Activated CD8-positive, alpha-beta T cell treated with anti-CD3 and anti-CD28 coated beads, Interleukin-2, amount 10 ng/mL, durations not matched to agents 7 days and 5 days (primary cell): ENCODE measurements at regions of chr14 and their contacts with region 1.

Region 1: GRCh38 chr14:39432179-39432618 is at the start of gene FBXO33:
- DNase-seq: peak; percentile 97
- ATAC-seq: peak; percentile 84
- H3K4me3 Mint-ChIP-seq: peak within 1 kb of the TSS; percentile 97
- H3K27ac Mint-ChIP-seq: peak within 1 kb of the TSS; percentile 100
- H3K4me1 Mint-ChIP-seq: peaks cover 40% of the 10 kb centered on the region
- H3K27me3 Mint-ChIP-seq: no peaks in the 10 kb centered on the region
- total RNA-seq, gene FBXO33: 18.7 to 19.0 TPM

Region 2: GRCh38 chr14:39102969-39103957 is 328.9 kb before region 1 on chr14 and contains the start of gene SEC23A:
- CTCF ChIA-PET with region 1: interaction called, 5 read pairs
- POLR2A ChIA-PET with region 1: interaction called, 37 read pairs
- DNase-seq: peak; percentile 88
- ATAC-seq: peak; percentile 95
- H3K4me3 Mint-ChIP-seq: peak within 1 kb of the TSS; percentile 96
- H3K27ac Mint-ChIP-seq: peak within 1 kb of the TSS; percentile 97
- H3K4me1 Mint-ChIP-seq: peaks cover 50% of the 10 kb centered on the region
- H3K27me3 Mint-ChIP-seq: no peaks in the 10 kb centered on the region
- total RNA-seq, gene SEC23A: 48.2 to 50.2 TPM

Region 3: DNA sequence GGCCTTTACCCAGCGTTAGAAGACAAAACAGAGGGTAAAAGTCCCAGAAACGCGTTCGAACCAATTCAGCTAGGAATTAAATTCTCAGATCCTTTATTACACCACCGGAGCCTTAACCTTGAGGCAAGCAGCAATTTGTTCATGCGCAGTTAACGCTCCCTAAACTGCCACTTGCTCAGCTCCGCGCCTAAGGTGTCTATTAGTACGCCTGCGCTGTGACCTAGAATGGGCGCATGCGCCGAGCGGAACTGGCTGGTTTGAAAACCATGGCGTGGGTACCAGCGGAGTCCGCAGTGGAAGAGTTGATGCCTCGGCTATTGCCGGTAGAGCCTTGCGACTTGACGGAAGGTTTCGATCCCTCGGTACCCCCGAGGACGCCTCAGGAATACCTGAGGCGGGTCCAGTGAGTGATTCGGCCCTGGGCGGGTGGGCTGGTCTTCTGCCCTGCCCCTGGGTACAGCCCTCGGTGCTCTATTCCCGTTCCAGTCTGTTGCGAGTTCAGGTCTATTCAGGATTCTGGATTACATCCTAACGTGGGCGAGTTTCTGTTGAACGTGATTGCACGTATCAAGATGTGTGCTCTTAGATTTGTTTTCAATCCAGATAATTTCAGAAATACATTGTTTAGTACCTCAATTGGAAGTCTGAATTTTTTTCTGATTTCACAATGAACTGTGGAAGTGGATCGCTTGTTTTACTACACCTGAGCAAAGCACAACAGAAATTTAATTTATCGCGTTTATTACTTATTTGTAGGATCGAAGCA is 317.9 kb before region 1 on chr14 and contains the start of gene GEMIN2:
- CTCF ChIA-PET with region 1: no interaction called
- POLR2A ChIA-PET with region 1: interaction called, 17 read pairs
- DNase-seq: peak; percentile 96
- ATAC-seq: peak; percentile 99
- H3K4me3 Mint-ChIP-seq: peak within 1 kb of the TSS; percentile 95
- H3K27ac Mint-ChIP-seq: peak within 1 kb of the TSS; percentile 92
- H3K4me1 Mint-ChIP-seq: peaks cover 35% of the 10 kb centered on the region
- H3K27me3 Mint-ChIP-seq: peaks cover 2% of the 10 kb centered on the region
- total RNA-seq, gene GEMIN2: 25.4 to 26.7 TPM

Region 4: DNA sequence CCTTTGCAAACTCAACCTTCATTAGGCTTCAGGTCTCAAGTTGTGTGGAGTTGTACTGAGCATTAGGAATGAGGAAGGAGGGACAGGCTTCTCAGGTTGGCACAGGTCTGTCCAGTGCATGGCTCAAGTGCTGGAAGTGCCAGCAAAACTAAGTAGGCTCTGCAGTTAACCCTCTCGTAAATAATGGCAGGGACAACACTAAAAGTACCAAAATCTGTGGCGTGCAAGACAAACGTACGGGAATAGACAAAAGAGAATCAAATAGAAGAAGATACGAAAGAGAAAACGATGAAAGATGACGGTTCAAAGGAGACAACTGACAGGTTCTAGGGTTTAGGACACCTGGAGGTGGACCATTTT is 262.7 kb before region 1 on chr14:
- CTCF ChIA-PET with region 1: interaction called, 4 read pairs
- POLR2A ChIA-PET with region 1: interaction called, 24 read pairs
- DNase-seq: no peak
- ATAC-seq: peak; percentile 4
- H3K4me3 Mint-ChIP-seq: peak overlapping the region; percentile 82
- H3K27ac Mint-ChIP-seq: peak overlapping the region; percentile 98
- H3K4me1 Mint-ChIP-seq: peaks cover 44% of the 10 kb centered on the region
- H3K27me3 Mint-ChIP-seq: no peaks in the 10 kb centered on the region

Region 5: GRCh38 chr14:39174560-39175444 is 257.4 kb before region 1 on chr14 and contains the start of gene PNN:
- CTCF ChIA-PET with region 1: interaction called, 4 read pairs
- POLR2A ChIA-PET with region 1: interaction called, 24 read pairs
- DNase-seq: peak; percentile 99
- ATAC-seq: peak; percentile 92
- H3K4me3 Mint-ChIP-seq: peak within 1 kb of the TSS; percentile 98
- H3K27ac Mint-ChIP-seq: peak within 1 kb of the TSS; percentile 99
- H3K4me1 Mint-ChIP-seq: peaks cover 45% of the 10 kb centered on the region
- H3K27me3 Mint-ChIP-seq: no peaks in the 10 kb centered on the region
- total RNA-seq, gene PNN: 94.1 to 103 TPM

Region 6: GRCh38 chr14:39266871-39267591 is 165.2 kb before region 1 on chr14:
- CTCF ChIA-PET with region 1: interaction called, 3 read pairs
- POLR2A ChIA-PET with region 1: interaction called, 44 read pairs
- DNase-seq: peak; percentile 83
- ATAC-seq: peak; percentile 86
- H3K4me3 Mint-ChIP-seq: peak overlapping the region; percentile 93
- H3K27ac Mint-ChIP-seq: peak overlapping the region; percentile 97
- H3K4me1 Mint-ChIP-seq: peaks cover 54% of the 10 kb centered on the region
- H3K27me3 Mint-ChIP-seq: no peaks in the 10 kb centered on the region

Region 7: GRCh38 chr14:39383026-39383660 is 49.1 kb before region 1 on chr14:
- CTCF ChIA-PET with region 1: interaction called, 17 read pairs
- POLR2A ChIA-PET with region 1: interaction called, 15 read pairs
- DNase-seq: no peak
- ATAC-seq: peak; percentile 61
- H3K4me3 Mint-ChIP-seq: no peak overlapping the region
- H3K27ac Mint-ChIP-seq: no peak overlapping the region
- H3K4me1 Mint-ChIP-seq: peaks cover 25% of the 10 kb centered on the region
- H3K27me3 Mint-ChIP-seq: no peaks in the 10 kb centered on the region